GM13976 (cell line): ENCODE measurements at regions of chr7 and their contacts with region 1.

Region 1: DNA sequence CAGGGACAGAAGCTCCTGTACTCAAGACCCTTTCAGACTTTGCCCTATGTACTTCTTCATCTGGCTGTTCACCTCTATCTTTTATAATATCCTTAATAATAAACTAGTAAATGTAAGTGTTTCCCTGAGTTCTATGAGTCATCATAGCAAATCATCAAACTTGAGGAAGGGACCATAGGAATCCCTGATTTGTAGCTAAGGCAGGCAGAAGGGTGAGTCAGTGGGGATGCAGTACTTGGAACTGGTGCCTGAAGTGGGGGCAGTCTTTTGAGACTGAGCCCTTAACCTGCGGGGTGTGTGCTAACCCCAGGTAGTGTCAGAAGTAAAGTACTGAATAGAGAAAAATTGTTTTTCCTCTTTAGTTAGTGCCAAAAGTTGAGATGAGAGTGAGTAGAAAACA is 6.2 kb upstream of the TMEM243 start:
- DNase-seq: no peak
- CTCF ChIP-seq: no peak

Region 2: GRCh38 chr7:86932038-86932512 is 293.6 kb before region 1 on chr7:
- in situ Hi-C with region 1: loop called (anchors 5 kb)
- DNase-seq: no peak
- CTCF ChIP-seq: no peak

Region 3: GRCh38 chr7:87494454-87494853 is 268.8 kb after region 1 on chr7:
- in situ Hi-C with region 1: no loop called
- DNase-seq: no peak
- CTCF ChIP-seq: no peak